ENCODE measurements at regions of chr19 and their contacts with region 1.

Region 1: DNA sequence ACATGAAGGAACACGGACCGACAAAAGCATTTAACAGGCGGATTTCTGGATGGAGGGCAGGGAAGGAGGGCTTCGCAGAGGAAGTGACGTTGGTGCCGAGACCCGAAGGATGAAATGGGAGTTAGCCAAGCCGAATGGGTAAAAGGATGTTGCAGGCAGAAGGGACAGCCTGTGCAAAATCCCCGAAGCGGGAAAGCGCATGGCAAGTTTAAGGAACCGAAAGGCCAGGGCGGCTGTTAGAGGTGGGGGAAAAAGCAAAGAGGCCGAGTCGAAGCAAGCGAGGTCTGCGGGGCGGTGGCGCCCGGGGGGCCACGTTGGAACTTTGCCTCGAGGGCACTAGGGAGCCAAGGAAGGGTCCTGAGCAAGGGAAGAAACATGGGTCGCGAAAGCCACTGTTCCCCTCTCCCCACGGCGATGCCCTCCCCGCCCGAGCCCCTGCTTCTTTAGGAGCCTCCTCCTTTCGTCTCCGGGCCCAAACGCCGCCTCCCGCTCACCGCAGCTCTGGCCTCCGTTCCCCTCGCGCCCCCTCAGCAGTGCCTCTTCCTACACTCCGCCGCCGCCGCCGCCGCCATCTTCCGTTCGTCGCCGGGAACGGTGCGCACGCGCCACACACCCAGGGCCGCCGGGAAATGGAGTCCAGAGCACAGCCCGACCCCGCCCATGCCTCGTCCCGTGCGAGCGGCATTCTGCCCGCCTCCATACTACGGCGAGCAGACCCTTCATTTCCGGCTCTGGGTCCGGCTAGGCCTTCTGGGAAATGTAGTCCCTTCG is at the start of gene SYMPK:
- DNase-seq: peak; percentile 99
- H3K4me3 Mint-ChIP-seq: peak within 1 kb of the TSS; percentile 94
- H3K27ac Mint-ChIP-seq: peak within 1 kb of the TSS; percentile 93
- H3K4me1 Mint-ChIP-seq: peaks cover 23% of the 10 kb centered on the region
- H3K27me3 Mint-ChIP-seq: peaks cover 20% of the 10 kb centered on the region
- total RNA-seq, gene SYMPK: 87.8 to 91.6 TPM

Region 2: DNA sequence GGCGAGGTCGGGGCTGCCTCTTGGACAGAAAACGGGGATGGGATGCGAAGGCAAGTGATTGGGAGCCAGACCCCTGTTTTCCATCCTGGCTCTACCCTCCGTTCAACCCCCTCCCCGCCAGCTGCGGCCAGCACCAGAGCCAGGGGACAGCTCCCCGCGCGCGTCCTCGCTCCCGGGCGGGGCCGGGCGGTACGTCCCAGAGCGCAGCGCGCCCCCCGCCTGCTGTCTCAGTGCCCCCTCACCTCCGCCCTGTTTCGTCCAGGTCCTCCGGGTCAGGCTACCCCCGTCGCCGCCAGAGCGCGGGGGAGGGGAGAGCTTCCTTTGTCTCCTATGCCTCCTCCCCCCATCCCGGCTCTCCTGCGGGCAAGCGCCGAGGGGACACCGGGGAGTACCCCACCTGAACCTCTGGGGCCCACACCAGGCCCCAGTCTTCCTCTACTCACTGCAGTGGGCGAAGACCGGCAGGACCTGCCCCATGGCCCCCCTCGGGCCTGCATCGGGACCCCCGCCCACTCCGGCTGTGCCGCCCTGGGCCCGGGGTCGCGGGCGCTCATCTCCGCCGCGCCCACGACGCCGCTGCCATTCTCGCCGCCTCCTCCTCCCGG is 366.3 kb before region 1 on chr19:
- CTCF ChIA-PET with region 1: no interaction called
- POLR2A ChIA-PET with region 1: no interaction called
- intact Hi-C with region 1: loop called (anchors 5 kb)
- DNase-seq: peak; percentile 60
- H3K4me3 Mint-ChIP-seq: peak overlapping the region; percentile 50
- H3K27ac Mint-ChIP-seq: no peak overlapping the region
- H3K4me1 Mint-ChIP-seq: peaks cover 33% of the 10 kb centered on the region
- H3K27me3 Mint-ChIP-seq: peaks cover 25% of the 10 kb centered on the region

Region 3: DNA sequence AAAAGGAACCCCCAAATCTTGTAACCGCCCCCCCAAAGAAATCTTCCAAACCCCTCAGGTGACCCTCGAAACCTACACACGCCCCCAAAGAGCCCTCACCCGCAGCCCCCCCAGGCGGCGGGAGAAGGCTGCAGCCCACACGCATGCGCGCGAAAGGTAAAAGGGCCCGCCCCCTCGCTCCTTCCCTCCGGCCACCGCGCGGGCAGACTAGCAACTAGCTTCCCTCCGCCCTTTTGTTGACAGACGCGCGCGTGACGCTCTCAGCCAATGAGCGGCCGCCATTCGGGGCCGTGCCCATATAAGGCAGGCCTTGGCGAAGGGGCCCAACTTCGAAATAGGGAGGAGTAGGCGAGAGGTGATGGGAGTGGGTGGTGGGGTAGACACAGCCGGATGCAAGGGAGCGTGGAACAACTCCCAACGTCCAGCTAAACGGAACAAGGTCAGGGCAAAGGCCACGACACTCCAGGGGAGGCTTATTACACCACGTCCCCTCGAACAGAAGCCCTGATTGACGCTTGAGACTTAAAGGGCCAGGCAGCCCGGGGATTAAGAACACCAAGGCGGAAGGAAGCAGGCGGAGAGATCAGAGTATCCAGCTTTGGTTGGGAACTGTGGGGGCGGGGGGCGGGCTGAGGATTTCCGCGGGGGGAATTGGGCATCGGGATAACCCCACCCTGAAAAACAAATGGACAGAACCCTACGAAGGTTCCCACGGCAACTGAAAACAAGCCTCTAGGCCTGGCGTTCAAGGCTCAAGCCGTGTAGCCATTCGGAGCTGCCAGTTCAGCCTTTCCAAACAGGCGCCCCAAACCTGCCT is 145.4 kb before region 1 on chr19:
- CTCF ChIA-PET with region 1: no interaction called
- POLR2A ChIA-PET with region 1: interaction called, 3 read pairs
- intact Hi-C with region 1: loop called (anchors 2 kb)
- DNase-seq: peak; percentile 99
- H3K4me3 Mint-ChIP-seq: peak overlapping the region; percentile 96
- H3K27ac Mint-ChIP-seq: peak overlapping the region; percentile 93
- H3K4me1 Mint-ChIP-seq: peaks cover 39% of the 10 kb centered on the region
- H3K27me3 Mint-ChIP-seq: no peaks in the 10 kb centered on the region

Region 4: DNA sequence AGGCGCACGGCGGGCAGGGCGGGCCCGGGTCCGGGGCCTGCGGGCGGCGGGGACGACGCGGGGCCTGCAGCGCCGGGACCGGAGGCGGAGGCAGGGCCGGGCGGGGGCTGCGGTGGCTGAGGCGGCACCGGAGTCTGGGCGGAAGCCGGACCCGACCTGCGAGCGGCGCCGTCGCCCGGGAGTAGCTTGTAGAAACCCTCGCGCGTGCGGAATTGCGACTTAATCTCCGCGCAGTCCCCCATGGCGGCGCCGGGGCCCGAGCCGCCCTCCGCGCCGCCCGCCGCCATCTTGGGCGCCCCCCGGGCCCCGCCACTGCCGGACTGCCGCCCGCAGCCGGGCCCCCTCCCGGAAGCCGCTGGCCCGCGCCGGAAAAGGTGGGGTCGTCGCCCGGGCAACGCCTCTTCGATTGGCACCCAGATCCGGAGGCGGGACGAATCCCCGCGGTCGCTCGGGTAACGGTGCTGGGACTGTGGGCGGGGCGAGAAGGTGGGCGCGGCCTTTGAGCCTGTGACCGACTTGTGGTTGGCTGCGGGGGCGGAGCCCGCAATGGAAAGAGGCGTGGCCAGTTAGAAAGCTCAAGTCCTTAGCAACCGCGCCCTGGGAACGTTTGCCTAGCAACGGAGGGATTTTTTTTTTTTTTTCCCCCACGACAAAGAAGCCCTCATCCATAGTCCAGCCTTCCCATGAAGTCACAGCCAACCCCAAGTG is 70.1 kb before region 1 on chr19 and contains the start of gene DMWD:
- CTCF ChIA-PET with region 1: no interaction called
- POLR2A ChIA-PET with region 1: interaction called, 3 read pairs
- intact Hi-C with region 1: loop called (anchors 2 kb)
- DNase-seq: peak; percentile 100
- H3K4me3 Mint-ChIP-seq: peak within 1 kb of the TSS; percentile 94
- H3K27ac Mint-ChIP-seq: peak within 1 kb of the TSS; percentile 79
- H3K4me1 Mint-ChIP-seq: peaks cover 30% of the 10 kb centered on the region
- H3K27me3 Mint-ChIP-seq: peaks cover 18% of the 10 kb centered on the region
- total RNA-seq, gene DMWD: 43.1 to 45.8 TPM

Region 5: DNA sequence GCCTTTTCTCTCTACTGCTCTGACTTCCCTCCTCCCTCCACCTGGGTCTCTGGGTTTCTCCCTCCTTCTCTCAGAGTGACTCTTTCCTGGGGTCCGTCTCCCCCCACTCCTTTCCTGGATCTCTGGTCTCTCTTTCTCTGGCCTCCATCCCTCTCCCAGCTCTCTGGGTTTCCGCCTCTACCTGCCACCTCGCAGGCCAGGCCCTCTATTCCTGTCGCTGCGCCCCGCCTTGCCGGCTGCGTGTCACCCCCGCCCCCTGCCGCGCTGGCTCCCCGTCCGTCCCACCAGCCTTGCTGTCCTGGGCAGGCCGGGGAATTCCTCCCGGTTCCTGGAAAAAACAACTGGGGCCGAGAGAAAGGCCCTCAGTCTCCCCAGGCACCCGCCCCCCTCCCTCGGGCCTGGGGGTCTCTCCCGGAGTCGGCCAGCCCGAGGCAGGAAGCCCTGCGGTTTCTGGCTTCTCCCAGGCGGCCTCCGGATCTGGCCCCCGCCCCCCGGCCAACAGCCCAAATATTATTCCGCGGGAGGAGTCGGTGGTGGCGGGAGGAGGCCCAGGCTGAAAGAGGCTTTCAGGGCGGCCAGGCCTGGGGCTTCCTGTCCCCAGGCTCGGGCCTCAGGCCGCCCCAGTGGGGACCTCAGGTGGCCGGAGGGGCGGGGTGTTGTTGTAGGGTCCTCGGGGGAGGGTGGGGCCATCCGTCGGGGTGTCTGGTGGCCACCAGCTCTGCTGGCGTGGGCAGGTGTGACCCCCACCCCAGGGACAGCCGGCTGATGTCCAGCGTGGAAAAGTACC is 13.9 kb after region 1 on chr19:
- CTCF ChIA-PET with region 1: interaction called, 106 read pairs
- POLR2A ChIA-PET with region 1: interaction called, 7 read pairs
- intact Hi-C with region 1: loop called (anchors 1 kb)
- DNase-seq: peak; percentile 83
- H3K4me3 Mint-ChIP-seq: peak overlapping the region; percentile 44
- H3K27ac Mint-ChIP-seq: peak overlapping the region; percentile 6
- H3K4me1 Mint-ChIP-seq: peaks cover 28% of the 10 kb centered on the region
- H3K27me3 Mint-ChIP-seq: peaks cover 7% of the 10 kb centered on the region

Region 6: GRCh38 chr19:45902651-45903625 is 40.2 kb after region 1 on chr19:
- CTCF ChIA-PET with region 1: interaction called, 14 read pairs
- POLR2A ChIA-PET with region 1: interaction called, 10 read pairs
- intact Hi-C with region 1: loop called (anchors 1 kb)
- DNase-seq: peak; percentile 100
- H3K4me3 Mint-ChIP-seq: peak overlapping the region; percentile 93
- H3K27ac Mint-ChIP-seq: peak overlapping the region; percentile 80
- H3K4me1 Mint-ChIP-seq: peaks cover 7% of the 10 kb centered on the region
- H3K27me3 Mint-ChIP-seq: no peaks in the 10 kb centered on the region

Region 7: DNA sequence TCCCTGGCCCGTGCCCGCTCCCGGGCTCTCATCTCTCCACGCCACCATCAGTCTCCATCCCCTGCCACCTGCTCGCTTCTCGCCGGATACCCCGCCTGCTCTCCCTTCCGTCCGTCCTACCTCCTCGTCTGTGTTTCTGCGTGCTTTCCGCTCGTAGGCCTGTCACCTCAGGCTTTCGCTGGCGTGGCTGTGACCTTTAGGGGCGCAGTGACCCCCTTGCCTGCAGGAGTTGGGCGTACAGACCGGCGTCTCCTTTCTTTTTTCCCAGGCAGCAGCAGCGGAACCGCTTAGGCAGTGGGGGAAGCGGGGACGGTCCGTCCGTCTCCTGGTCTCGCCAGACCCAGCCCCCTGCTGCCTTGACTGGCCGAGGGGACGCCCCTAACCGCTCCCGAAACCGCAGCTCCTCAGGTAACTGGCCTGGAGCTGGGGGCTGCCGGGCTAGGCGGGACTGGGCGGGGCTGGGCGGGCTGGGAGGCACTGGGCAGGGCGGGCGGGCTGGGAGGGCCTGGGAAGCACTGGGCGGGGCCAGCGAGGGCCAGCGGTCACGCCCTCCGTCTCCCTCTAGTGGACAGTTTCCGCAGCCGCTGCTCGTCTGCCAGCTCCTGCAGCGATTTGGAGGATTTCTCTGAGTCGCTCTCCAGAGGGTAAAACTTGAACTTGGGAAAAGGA is 153.8 kb after region 1 on chr19:
- CTCF ChIA-PET with region 1: interaction called, 7 read pairs
- POLR2A ChIA-PET with region 1: interaction called, 4 read pairs
- intact Hi-C with region 1: loop called (anchors 2 kb)
- DNase-seq: peak; percentile 88
- H3K4me3 Mint-ChIP-seq: peak overlapping the region; percentile 74
- H3K27ac Mint-ChIP-seq: no peak overlapping the region
- H3K4me1 Mint-ChIP-seq: peaks cover 17% of the 10 kb centered on the region
- H3K27me3 Mint-ChIP-seq: peaks cover 13% of the 10 kb centered on the region